Gastrocnemius medialis (tissue), 4 donors: ENCODE measurements at regions of chr9 and their contacts with region 1.

Region 1: DNA sequence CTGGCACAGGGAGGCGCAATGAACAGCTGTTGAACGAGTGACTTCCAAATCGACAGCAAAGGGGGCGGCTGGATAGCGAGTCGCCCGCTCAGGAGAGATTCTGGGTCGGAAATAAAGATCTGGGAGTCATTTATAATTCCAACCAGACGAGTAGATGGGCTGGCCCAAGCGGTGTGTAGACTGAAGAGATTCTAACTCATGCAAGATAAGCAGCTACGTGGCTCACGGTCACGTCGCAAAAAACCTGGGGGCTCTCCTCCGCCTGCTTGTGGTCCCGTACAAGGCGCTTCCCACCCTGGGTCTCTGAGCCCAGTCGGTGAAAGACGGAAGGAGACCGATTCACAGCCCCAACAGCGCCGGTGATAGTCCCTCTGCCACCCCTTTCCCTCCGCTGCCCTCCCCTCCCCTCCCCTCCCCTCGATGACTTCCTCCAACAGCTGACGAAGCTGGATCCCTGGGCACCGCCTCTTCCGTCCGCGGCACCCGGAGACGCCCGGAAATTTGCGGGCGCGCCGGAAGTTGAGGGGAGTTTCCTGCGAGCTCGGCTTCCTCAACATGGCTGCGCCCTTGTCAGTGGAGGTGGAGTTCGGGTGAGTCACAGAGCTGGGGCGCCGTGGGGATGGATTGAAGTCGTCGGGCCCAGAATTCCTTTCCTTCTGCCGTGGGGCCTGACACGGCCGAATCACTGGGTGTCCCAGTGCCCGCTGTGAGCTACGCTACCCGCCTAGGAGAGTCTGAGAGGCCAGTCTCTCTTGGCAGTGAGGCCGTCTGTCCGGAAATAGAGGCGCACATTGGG is at the start of gene URM1:
- DNase-seq: peak; percentile 87 to 94
- ATAC-seq: peak; percentile 97
- H3K4me3 ChIP-seq: peak within 1 kb of the TSS; percentile 73 to 87 (median 78)
- H3K27ac ChIP-seq: peak within 1 kb of the TSS; percentile 85 to 94 (median 92)
- H3K4me1 ChIP-seq: peaks cover 16 to 17% of the 10 kb centered on the region in 2 donors
- H3K27me3 ChIP-seq: no peaks in the 10 kb centered on the region
- CTCF ChIP-seq: no peak
- POLR2A ChIP-seq: peak; percentile 87 to 93
- total RNA-seq, gene URM1: 24.1 to 34.1 (median 32.9) TPM

Region 2: GRCh38 chr9:128231638-128232527 is 139.1 kb before region 1 on chr9:
- in situ Hi-C with region 1: no loop called
- intact Hi-C with region 1: no loop called
- DNase-seq: peak in 1 of 2 donors; percentile 51
- ATAC-seq: peak; percentile 68 to 82
- H3K4me3 ChIP-seq: no peak overlapping the region
- H3K27ac ChIP-seq: peak overlapping the region in 2 of 4 donors; percentile 10 to 33
- H3K4me1 ChIP-seq: no peaks in the 10 kb centered on the region
- H3K27me3 ChIP-seq: no peaks in the 10 kb centered on the region
- CTCF ChIP-seq: no peak
- POLR2A ChIP-seq: no peak

Region 3: DNA sequence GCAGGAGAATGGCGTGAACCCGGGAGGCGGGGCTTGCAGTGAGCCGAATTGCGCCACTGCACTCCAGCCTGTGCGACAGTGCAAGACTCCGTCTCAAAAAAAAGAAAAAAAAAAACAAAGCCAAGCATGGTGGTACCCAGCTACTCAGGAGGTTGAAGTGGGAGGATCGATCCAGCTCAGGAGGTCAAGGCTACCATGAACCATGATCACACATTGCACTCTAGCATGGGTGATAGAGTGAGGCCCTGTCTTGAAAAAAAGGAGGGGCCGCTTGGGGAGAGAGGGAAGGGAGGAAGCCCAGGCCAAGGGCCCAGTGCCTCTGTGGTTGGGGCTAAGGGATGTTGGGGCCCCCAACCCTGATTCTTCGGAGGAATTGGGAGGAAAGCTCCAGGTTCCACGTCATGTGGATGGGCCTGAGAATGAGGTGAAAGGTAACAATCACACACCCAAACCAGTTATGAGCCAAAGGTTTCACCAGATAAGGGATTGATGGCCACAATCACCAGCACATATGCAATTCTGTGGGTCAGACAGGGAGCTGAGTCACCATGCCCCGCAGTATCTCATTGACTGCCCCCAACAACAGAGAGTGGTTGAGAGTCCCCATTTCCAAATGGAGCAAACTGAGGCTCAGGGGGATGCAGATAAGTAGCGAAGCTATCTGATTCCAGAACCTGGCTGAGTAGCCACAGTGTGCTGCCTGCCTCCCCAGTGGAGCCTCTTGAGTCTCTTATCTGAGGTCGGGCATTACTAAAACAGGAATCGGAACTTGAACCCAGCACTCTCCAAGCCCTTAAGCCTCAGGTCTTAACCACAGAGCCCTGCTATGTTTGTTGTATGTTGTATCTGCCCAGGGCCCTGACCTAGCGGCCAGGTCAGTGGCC is 74.4 kb before region 1 on chr9:
- in situ Hi-C with region 1: no loop called
- intact Hi-C with region 1: no loop called
- DNase-seq: no peak
- ATAC-seq: no peak
- H3K4me3 ChIP-seq: no peak overlapping the region
- H3K27ac ChIP-seq: no peak overlapping the region
- H3K4me1 ChIP-seq: no peaks in the 10 kb centered on the region
- H3K27me3 ChIP-seq: no peaks in the 10 kb centered on the region
- CTCF ChIP-seq: no peak
- POLR2A ChIP-seq: no peak

Region 4: DNA sequence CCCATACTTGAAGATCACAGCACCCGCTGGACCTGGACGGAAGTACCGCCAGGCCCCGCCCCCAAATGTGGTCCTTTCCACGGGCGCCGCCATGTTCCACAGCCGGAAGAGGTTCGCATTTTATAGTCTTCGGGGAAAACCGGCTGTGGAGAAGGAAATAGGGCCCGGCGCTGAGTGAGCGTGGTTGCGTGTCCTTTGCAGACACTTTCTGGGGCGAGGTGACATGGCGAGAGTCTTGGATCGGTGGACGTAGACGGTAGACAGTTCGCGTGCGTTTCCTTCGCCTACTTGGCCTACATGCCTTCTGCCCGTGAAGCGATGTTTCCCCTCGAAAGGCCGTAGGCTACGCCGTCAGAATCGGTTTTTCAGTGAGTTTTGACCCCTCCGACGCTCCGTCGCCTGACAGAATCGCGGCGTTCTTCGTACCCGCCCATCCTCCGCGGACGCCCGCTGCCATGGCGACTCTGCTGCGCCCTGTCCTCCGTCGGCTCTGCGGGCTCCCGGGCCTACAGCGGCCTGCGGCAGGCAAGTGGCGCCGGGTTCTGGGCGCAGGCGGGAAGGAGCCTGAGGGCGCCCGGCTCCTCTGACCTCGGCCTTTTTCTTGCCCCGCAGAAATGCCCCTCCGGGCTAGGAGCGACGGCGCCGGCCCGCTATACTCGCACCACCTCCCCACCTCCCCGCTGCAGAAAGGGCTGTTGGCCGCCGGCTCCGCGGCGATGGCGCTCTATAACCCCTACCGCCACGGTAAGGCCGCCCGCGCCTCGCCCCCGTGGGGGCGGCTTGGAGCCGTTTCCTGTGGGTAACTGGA is 48.4 kb before region 1 on chr9 and contains the starts of genes COQ4 and TRUB2:
- in situ Hi-C with region 1: no loop called
- intact Hi-C with region 1: loop called (anchors 2 kb)
- DNase-seq: peak; percentile 91 to 92
- ATAC-seq: peak; percentile 99
- H3K4me3 ChIP-seq: peak within 1 kb of the TSS; percentile 75 to 97 (median 94)
- H3K27ac ChIP-seq: peak within 1 kb of the TSS; percentile 83 to 95 (median 92)
- H3K4me1 ChIP-seq: peaks cover 16 to 35% of the 10 kb centered on the region in 2 donors
- H3K27me3 ChIP-seq: no peaks in the 10 kb centered on the region
- CTCF ChIP-seq: peak in 1 of 5 experiments; percentile 18
- POLR2A ChIP-seq: no peak
- total RNA-seq, gene COQ4: 25.1 to 42.4 (median 34.3) TPM
- total RNA-seq, gene TRUB2: 7.1 to 18.1 (median 14.3) TPM

Region 5: DNA sequence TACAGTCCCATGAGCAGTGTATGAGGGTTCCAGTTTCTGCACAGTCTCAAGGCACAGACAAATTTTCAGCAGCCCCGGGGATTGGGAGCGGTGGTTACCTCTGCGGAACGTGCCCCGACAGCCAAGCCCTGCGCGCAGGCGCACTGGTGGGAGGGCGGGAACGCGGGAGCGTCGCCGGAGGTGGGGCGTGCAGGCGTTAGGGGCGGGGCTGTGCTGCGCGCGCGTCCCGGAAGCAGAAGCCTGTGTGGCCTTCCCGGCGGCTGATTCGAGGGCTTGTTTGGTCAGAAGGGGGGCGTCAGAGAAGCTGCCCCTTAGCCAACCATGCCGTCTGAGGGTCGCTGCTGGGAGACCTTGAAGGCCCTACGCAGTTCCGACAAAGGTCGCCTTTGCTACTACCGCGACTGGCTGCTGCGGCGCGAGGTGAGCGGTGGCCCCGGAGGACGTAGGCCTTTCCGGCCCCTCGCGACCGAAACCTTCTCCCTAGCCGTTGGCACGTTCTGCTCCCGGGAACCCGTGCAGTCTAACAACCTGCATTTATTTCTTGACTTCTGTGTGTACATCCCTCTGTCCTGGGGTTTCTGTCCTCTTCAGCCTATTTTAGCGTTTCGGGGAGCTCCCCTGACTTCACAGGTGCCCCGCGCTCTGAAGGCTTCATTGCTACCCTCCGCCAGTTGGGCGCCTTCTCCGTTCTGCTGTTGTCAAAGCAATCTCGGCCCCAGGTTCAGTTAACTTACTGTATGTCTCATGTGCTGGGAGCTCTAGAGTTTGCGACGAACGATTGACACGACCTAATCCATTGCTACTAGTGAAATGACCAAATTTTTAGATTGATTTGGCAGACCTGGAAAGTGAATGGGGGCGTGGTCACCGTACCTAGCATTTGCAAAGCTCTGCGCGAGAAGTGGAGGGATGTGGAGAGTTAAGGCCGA is 133.7 kb after region 1 on chr9 and contains the start of gene GLE1:
- in situ Hi-C with region 1: no loop called
- intact Hi-C with region 1: loop called (anchors 5 kb)
- DNase-seq: peak; percentile 86 to 91
- ATAC-seq: peak; percentile 94 to 97
- H3K4me3 ChIP-seq: peak within 1 kb of the TSS; percentile 78 to 95 (median 88)
- H3K27ac ChIP-seq: peak within 1 kb of the TSS; percentile 82 to 93 (median 84)
- H3K4me1 ChIP-seq: peaks cover 15 to 18% of the 10 kb centered on the region in 2 donors
- H3K27me3 ChIP-seq: no peaks in the 10 kb centered on the region
- CTCF ChIP-seq: no peak
- POLR2A ChIP-seq: peak; percentile 30 to 68
- total RNA-seq, gene GLE1: 31.4 to 56.7 (median 32.7) TPM

Region 6: GRCh38 chr9:128771745-128772519 is 400.9 kb after region 1 on chr9 and contains the start of gene ZER1:
- in situ Hi-C with region 1: no loop called
- intact Hi-C with region 1: loop called (anchors 5 kb)
- DNase-seq: peak; percentile 87 to 88
- ATAC-seq: peak; percentile 93 to 94
- H3K4me3 ChIP-seq: peak within 1 kb of the TSS; percentile 90 to 100 (median 95)
- H3K27ac ChIP-seq: peak within 1 kb of the TSS; percentile 88 to 99 (median 96)
- H3K4me1 ChIP-seq: peaks cover 17 to 36% of the 10 kb centered on the region in 2 donors
- H3K27me3 ChIP-seq: no peaks in the 10 kb centered on the region
- CTCF ChIP-seq: no peak
- POLR2A ChIP-seq: peak; percentile 73 to 86
- total RNA-seq, gene ZER1: 63.6 to 115 (median 105) TPM